ENCODE measurements at regions of chr12 and their contacts with region 1.

Region 1: DNA sequence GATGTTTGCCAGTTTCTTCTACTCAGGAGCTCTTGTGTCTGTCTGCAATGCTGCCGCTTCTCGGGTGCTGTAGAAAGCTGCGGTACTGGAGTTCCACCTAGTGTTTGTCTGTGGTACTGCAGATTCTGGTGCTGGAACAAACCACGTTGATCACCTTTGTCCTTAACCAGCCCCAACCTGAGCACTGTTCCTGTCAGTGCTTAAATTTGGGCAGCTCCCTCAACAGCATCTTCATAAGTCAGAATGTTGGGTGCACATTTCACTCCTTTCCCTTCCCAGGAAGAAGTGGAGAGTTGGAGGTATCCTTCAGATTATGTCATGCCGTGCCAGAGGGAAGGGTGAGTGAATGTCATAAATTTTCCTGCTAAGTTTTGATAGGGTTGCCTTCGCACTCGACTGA is 48.7 kb upstream of the LALBA start:
- DNase-seq: peak; percentile 80
- H3K4me3 ChIP-seq: no peak overlapping the region
- H3K27ac ChIP-seq: no peak overlapping the region
- H3K4me1 ChIP-seq: no peaks in the 10 kb centered on the region
- H3K27me3 ChIP-seq: no peaks in the 10 kb centered on the region
- CTCF ChIP-seq: peak; percentile 98

Region 2: DNA sequence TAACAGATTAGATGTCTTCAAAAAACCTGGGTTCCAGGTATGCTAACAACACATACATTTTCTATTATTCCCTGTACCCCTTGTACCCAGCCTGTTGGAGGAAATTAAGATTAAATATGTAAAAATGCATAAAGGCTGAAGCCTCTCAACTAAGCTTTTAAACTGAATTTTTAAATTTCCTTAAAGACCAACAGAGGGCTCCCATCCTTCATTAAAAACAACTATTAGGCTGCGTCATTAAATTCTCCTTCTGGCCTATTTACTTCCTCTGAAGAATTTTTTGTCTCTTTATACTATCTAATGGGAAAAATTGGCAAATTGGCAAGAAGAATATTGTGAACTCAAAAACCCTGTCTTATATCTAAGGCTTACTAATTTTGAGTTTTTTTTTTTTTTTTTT is 534.5 kb before region 1 on chr12:
- CTCF ChIA-PET with region 1: no interaction called
- POLR2A ChIA-PET with region 1: no interaction called
- intact Hi-C with region 1: loop called (anchors 10 kb)
- DNase-seq: peak; percentile 24
- H3K4me3 ChIP-seq: no peak overlapping the region
- H3K27ac ChIP-seq: no peak overlapping the region
- H3K4me1 ChIP-seq: no peaks in the 10 kb centered on the region
- H3K27me3 ChIP-seq: no peaks in the 10 kb centered on the region
- CTCF ChIP-seq: peak; percentile 36; the same call in 1 of the 2 replicates

Region 3: DNA sequence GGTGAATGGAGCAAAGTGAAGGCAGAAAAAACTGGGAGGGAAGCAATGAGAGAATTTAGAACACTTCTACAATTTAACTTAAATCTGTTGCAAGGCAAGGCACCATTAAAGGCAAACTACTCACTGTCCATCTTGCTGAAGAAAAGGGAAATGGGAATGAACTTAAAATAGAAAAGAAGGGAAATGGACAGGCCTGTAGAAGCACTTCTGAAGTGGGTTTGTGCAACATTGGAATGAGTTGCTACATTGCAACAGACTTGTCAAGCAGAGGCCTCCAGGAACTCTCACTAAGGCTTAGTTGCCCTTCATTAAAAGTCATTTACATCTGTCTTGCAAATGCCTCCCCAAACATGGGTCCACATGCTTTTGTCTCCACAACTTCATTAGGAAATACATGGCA is 401.8 kb before region 1 on chr12:
- CTCF ChIA-PET with region 1: no interaction called
- POLR2A ChIA-PET with region 1: no interaction called
- intact Hi-C with region 1: no loop called
- DNase-seq: no peak
- H3K4me3 ChIP-seq: no peak overlapping the region
- H3K27ac ChIP-seq: no peak overlapping the region
- H3K4me1 ChIP-seq: no peaks in the 10 kb centered on the region
- H3K27me3 ChIP-seq: no peaks in the 10 kb centered on the region
- CTCF ChIP-seq: no peak

Region 4: GRCh38 chr12:48542300-48542928 is 76.1 kb before region 1 on chr12:
- CTCF ChIA-PET with region 1: interaction called, 15 read pairs
- POLR2A ChIA-PET with region 1: no interaction called
- intact Hi-C with region 1: loop called (anchors 1 kb)
- DNase-seq: peak; percentile 33
- H3K4me3 ChIP-seq: no peak overlapping the region
- H3K27ac ChIP-seq: no peak overlapping the region
- H3K4me1 ChIP-seq: no peaks in the 10 kb centered on the region
- H3K27me3 ChIP-seq: peaks cover 9% of the 10 kb centered on the region
- CTCF ChIP-seq: peak; percentile 66

Region 5: DNA sequence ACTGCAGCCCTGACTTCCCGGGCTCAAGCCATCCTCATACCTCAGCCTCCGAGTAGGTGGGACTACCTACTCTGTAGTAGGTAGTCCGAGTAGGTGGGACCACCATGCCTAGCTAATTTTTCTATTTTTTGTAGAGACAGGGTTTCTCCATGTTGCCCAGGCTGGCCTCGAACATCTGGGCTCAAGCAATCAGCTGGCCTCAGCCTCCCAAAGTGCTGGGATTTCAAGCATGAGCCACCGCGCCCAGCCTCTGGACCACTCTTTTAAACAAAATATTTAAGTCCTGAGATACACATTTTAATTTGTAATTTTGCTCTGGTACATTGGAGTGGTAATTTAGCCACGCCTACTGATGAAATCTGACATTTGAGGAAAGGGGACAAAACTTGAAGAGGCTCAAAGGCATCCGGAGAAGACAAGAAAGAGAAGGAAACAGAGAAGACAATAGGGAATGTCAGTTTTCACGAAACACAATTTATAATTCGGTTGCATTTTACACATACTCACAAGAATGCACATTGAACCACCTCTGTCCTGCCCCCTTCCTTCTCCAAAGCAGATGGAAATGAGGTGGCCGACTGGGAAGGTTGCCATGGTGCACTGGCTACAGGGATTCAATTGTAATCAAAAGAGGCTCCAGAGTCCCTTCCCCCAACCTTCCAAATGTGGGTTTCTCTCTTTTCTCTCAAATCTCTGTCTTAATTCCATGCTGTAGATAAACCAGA is 580.1 kb after region 1 on chr12:
- CTCF ChIA-PET with region 1: no interaction called
- POLR2A ChIA-PET with region 1: no interaction called
- intact Hi-C with region 1: no loop called
- DNase-seq: peak; percentile 34
- H3K4me3 ChIP-seq: no peak overlapping the region
- H3K27ac ChIP-seq: no peak overlapping the region
- H3K4me1 ChIP-seq: peaks cover 30% of the 10 kb centered on the region
- H3K27me3 ChIP-seq: no peaks in the 10 kb centered on the region
- CTCF ChIP-seq: no peak